A549 (cell line): ENCODE measurements at regions of chr15 and their contacts with region 1.

Region 1: GRCh38 chr15:43791993-43792760 is at the start of gene SERF2:
- DNase-seq: peak; percentile 97 to 99
- ATAC-seq: peak; percentile 91 to 95
- H3K4me3 ChIP-seq: peak within 1 kb of the TSS; percentile 100
- H3K27ac ChIP-seq: peak within 1 kb of the TSS; percentile 97 to 100
- H3K4me1 ChIP-seq: peaks cover 16% of the 10 kb centered on the region; the same call in 2 of the 3 replicates
- CTCF ChIP-seq: no peak
- EP300 ChIP-seq: no peak
- POLR2A ChIP-seq: peak; percentile 92
- RAD21 ChIP-seq: no peak
- polyA plus RNA-seq, gene SERF2: 317 and 464 TPM in 2 replicates

Region 2: GRCh38 chr15:43776718-43777583 is 15.2 kb before region 1 on chr15 and contains the start of gene ELL3:
- CTCF ChIA-PET with region 1: interaction called, 47 read pairs
- POLR2A ChIA-PET with region 1: interaction called, 3 read pairs
- DNase-seq: peak; percentile 37 to 73
- ATAC-seq: peak; percentile 83 to 88
- H3K4me3 ChIP-seq: peak within 1 kb of the TSS; percentile 60
- H3K27ac ChIP-seq: peak within 1 kb of the TSS; percentile 77 to 91
- H3K4me1 ChIP-seq: 0 out of 3 replicates have a peak, but pooled peaks cover 8% of the 10 kb centered on the region
- CTCF ChIP-seq: peak; percentile 70
- EP300 ChIP-seq: no peak
- POLR2A ChIP-seq: no peak; the same call in 1 of the 2 replicates
- RAD21 ChIP-seq: no peak
- polyA plus RNA-seq, gene ELL3: 1.8 and 2.1 TPM in 2 replicates

Region 3: GRCh38 chr15:43808960-43809678 is 16.9 kb after region 1 on chr15:
- CTCF ChIA-PET with region 1: no interaction called
- POLR2A ChIA-PET with region 1: no interaction called
- DNase-seq: no peak
- ATAC-seq: no peak
- H3K4me3 ChIP-seq: no peak overlapping the region
- H3K27ac ChIP-seq: no peak overlapping the region
- H3K4me1 ChIP-seq: peaks cover 8% of the 10 kb centered on the region
- CTCF ChIP-seq: no peak
- EP300 ChIP-seq: no peak
- POLR2A ChIP-seq: no peak
- RAD21 ChIP-seq: no peak